HEK293 (cell line): ENCODE measurements at regions of chr3 and their contacts with region 1.

Region 1: GRCh38 chr3:94249585-94249984 is 186.7 kb downstream of the NSUN3 start:
- H3K4me3 ChIP-seq: no peak overlapping the region
- H3K27ac ChIP-seq: no peak overlapping the region
- H3K4me1 ChIP-seq: no peaks in the 10 kb centered on the region; the same call in 1 of the 2 replicates
- CTCF ChIP-seq: peak; percentile 55

Region 2: GRCh38 chr3:94234177-94234788 is 15.3 kb before region 1 on chr3:
- CTCF ChIA-PET with region 1: interaction called, 14 read pairs
- POLR2A ChIA-PET with region 1: interaction called, 6 read pairs
- H3K4me3 ChIP-seq: no peak overlapping the region
- H3K27ac ChIP-seq: no peak overlapping the region
- H3K4me1 ChIP-seq: no peaks in the 10 kb centered on the region
- CTCF ChIP-seq: no peak

Region 3: GRCh38 chr3:94336046-94336710 is 86.6 kb after region 1 on chr3:
- CTCF ChIA-PET with region 1: interaction called, 10 read pairs
- POLR2A ChIA-PET with region 1: no interaction called
- H3K4me3 ChIP-seq: no peak overlapping the region
- H3K27ac ChIP-seq: no peak overlapping the region
- H3K4me1 ChIP-seq: no peaks in the 10 kb centered on the region
- CTCF ChIP-seq: peak; percentile 17; the same call in 1 of the 2 replicates